ENCODE measurements at regions of chr4 and their contacts with region 1.

Region 1: DNA sequence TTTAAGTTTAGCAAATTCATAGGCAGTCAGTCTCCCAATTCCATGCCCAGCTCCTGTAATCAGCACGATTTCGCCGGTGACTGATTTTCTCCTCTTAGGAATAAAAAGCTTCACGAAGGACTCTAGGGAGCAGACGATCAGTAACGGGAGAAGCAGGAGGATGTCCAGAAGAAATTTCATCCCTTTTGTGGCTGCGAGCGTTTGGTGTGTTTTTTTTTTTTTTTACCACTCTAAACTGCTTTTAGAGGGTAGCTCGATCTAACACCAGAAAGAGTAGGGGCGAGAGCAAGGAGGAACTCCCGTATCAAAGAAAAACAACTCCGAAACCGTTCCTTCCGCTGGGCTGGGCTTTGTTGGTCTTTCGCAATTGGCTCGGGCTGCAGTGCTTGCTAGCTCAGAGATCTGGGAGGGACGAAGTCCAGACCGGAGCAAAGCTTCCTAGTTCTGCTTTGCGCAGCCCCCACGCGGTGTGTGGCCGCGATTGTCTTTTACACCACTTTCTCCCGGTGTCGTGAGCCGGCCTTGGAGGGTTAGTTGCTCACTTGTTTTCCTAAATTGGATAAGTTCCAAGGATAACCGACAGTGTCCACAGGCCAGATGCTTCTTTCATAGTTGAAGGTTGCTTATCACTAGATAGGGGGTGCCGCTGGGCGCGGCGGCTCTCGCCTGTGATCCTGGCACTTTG is at the start of gene HSD17B11:
- DNase-seq: peak; percentile 96
- ATAC-seq: peak; percentile 97
- H3K4me3 ChIP-seq: peak within 1 kb of the TSS; percentile 81 to 93 (median 88)
- H3K27ac ChIP-seq: peak within 1 kb of the TSS; percentile 87
- H3K4me1 ChIP-seq: peaks cover 30% of the 10 kb centered on the region
- H3K27me3 ChIP-seq: no peaks in the 10 kb centered on the region; a peak in 1 of 5 replicates
- CTCF ChIP-seq: peak; percentile 44
- EP300 ChIP-seq: peak in 1 of 2 experiments; percentile 78; a peak in 2 of 4 replicates
- POLR2A ChIP-seq: peak; percentile 76 to 88
- RAD21 ChIP-seq: 0 out of 2 replicates have a peak, but pooled peaks have one; percentile 42
- total RNA-seq, gene HSD17B11: 120 and 158 TPM in 2 replicates

Region 2: GRCh38 chr4:86326400-86326799 is 1064.6 kb before region 1 on chr4:
- CTCF ChIA-PET with region 1: no interaction called
- POLR2A ChIA-PET with region 1: no interaction called
- in situ Hi-C with region 1: no loop called
- intact Hi-C with region 1: no loop called
- DNase-seq: no peak
- ATAC-seq: no peak
- H3K4me3 ChIP-seq: no peak overlapping the region
- H3K27ac ChIP-seq: no peak overlapping the region
- H3K4me1 ChIP-seq: no peaks in the 10 kb centered on the region
- H3K27me3 ChIP-seq: no peaks in the 10 kb centered on the region
- CTCF ChIP-seq: no peak
- EP300 ChIP-seq: no peak
- POLR2A ChIP-seq: no peak
- RAD21 ChIP-seq: no peak

Region 3: DNA sequence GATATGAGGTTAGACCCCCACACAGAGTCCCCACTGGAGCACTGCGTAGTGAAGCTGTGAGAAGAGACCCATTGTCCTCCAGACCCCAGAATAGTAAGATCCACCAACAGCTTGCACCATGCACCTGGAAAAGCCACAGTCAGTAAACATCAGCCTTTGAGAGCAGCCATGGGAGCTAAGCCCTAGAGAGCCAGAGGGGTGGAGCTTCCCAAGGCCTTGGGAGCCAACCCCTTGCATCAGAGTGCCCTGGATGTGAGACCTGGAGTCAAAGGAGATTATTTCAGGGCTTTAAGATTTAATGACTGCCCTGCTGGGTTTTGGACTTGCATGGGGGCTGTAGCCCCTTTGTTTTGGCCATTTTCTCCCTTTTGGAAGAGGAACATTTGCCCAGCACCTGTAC is 104.1 kb before region 1 on chr4:
- CTCF ChIA-PET with region 1: no interaction called
- POLR2A ChIA-PET with region 1: no interaction called
- in situ Hi-C with region 1: no loop called
- intact Hi-C with region 1: no loop called
- DNase-seq: no peak
- ATAC-seq: no peak
- H3K4me3 ChIP-seq: no peak overlapping the region
- H3K27ac ChIP-seq: no peak overlapping the region
- H3K4me1 ChIP-seq: no peaks in the 10 kb centered on the region
- H3K27me3 ChIP-seq: no peaks in the 10 kb centered on the region
- CTCF ChIP-seq: no peak
- EP300 ChIP-seq: no peak
- POLR2A ChIP-seq: no peak
- RAD21 ChIP-seq: no peak

Region 4: DNA sequence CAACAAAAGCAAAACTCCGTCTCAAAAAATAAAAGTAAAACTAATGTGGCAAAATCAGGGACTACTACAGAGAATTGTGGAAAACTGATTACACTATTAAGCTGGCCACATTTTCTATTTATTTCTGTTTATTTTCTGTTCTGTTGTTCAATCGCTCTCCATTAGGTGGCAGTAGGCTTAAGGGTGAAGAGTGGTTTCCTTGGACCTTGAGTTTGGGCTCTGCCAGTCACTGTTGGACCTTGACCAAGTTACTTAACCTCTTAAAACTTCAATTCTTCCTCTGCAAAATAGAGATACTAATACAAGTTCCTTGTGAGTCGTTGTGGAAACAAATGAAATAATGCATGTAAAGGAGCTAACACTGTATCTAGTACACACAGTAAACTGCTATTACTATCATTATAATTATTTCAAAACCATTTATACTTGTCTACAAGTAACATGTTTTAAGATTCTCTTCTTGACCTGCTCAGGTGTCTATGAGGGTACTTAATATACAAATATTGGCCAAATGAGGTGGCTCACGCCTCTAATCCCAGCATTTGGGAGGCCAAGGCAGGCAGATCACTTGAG is 15.2 kb before region 1 on chr4:
- CTCF ChIA-PET with region 1: no interaction called
- POLR2A ChIA-PET with region 1: interaction called, 13 read pairs
- in situ Hi-C with region 1: no loop called
- intact Hi-C with region 1: no loop called
- DNase-seq: peak; percentile 61
- ATAC-seq: peak; percentile 75
- H3K4me3 ChIP-seq: no peak overlapping the region
- H3K27ac ChIP-seq: no peak overlapping the region
- H3K4me1 ChIP-seq: peaks cover 15% of the 10 kb centered on the region
- H3K27me3 ChIP-seq: no peaks in the 10 kb centered on the region
- CTCF ChIP-seq: peak; percentile 75
- EP300 ChIP-seq: peak in 1 of 2 experiments; percentile 20; a peak in 1 of 4 replicates
- POLR2A ChIP-seq: no peak
- RAD21 ChIP-seq: peak; percentile 76

Region 5: DNA sequence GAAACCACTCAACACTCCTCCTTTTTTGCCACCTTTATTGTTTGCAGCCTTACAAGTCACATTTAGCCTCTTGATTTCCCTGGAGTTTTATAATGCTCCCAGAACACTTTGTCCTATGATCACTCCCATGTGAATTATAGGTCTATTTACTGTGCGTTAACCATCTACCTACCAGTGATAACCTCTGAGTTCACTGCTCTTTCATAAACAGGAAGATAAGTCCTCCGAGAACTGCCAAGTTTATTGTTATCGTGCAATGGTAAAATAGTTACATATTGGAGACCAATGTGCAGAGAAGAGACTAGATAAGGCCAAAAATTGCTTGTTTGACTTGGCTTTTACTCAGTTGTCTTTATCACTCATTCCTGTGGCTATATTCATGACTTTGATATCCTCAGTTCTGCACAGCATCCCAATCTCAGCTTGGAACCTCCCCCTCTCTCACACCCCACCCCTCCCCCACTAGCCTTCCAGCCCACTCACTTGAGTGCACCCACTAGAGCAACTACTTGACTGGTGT is 18.4 kb after region 1 on chr4:
- CTCF ChIA-PET with region 1: no interaction called
- POLR2A ChIA-PET with region 1: interaction called, 13 read pairs
- in situ Hi-C with region 1: no loop called
- intact Hi-C with region 1: loop called (anchors 1 kb)
- DNase-seq: peak; percentile 89
- ATAC-seq: peak; percentile 92
- H3K4me3 ChIP-seq: peak overlapping the region; percentile 5 to 19 (median 7); a peak in 4 of 6 replicates
- H3K27ac ChIP-seq: peak overlapping the region; percentile 33
- H3K4me1 ChIP-seq: peaks cover 40% of the 10 kb centered on the region
- H3K27me3 ChIP-seq: no peaks in the 10 kb centered on the region
- CTCF ChIP-seq: no peak
- EP300 ChIP-seq: peak in 1 of 2 experiments; percentile 85; a peak in 2 of 4 replicates
- POLR2A ChIP-seq: no peak
- RAD21 ChIP-seq: no peak

Region 6: DNA sequence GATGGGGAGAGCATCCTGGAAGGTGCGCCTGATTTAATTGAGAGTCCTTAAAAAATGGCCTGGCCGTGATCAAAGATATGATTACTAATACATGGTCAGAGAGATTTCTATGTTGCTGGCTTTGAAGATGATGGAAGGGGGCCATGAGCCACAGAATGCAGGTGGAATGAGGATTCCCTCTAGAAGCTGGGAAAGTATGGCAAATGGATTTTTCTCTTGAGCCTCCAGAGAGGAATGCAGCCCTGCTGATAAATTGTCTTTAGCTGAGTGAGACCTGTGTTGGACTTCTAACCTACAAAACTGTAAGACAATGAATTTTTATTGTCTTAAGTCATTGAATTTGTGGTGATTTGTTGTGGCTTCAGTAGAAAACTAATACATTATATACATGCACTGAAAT is 39.0 kb after region 1 on chr4:
- CTCF ChIA-PET with region 1: no interaction called
- POLR2A ChIA-PET with region 1: interaction called, 172 read pairs
- in situ Hi-C with region 1: loop called (anchors 10 kb)
- intact Hi-C with region 1: no loop called
- DNase-seq: no peak
- ATAC-seq: no peak
- H3K4me3 ChIP-seq: no peak overlapping the region
- H3K27ac ChIP-seq: no peak overlapping the region
- H3K4me1 ChIP-seq: peaks cover 41% of the 10 kb centered on the region
- H3K27me3 ChIP-seq: no peaks in the 10 kb centered on the region
- CTCF ChIP-seq: no peak
- EP300 ChIP-seq: no peak
- POLR2A ChIP-seq: no peak
- RAD21 ChIP-seq: no peak

Measured in HepG2 (cell line).